ENCODE measurements at regions of chr10 and their contacts with region 1.

Region 1: GRCh38 chr10:61547297-61547696 is 94.1 kb upstream of the TMEM26 start:
- DNase-seq: no peak
- ATAC-seq: no peak
- H3K4me3 ChIP-seq: no peak overlapping the region
- H3K27ac ChIP-seq: no peak overlapping the region
- H3K4me1 ChIP-seq: no peaks in the 10 kb centered on the region
- H3K27me3 ChIP-seq: no peaks in the 10 kb centered on the region; the same call in none of the 2 replicates
- CTCF ChIP-seq: no peak
- POLR2A ChIP-seq: no peak
- RAD21 ChIP-seq: no peak

Region 2: DNA sequence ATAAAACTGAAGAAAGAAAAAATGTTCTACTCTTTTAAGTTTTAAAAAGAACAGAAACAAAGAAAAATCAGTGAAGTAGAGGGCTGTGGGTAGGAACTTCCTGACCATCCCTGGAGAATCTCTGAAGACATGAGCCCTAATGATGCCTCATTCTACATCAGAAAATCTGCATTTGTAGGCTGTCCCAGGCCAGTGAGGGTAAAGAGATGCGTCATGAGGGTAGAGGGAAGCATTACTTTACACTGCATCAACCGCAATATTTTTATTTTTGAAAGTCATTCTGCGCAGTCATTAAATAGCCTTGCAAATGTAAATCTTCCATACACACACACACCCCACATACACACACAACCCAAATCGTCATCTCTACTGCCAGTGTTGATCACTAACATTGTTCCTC is 33.3 kb after region 1 on chr10:
- CTCF ChIA-PET with region 1: no interaction called
- POLR2A ChIA-PET with region 1: no interaction called
- dilution Hi-C with region 1: no loop called
- in situ Hi-C with region 1: no loop called
- intact Hi-C with region 1: loop called (anchors 5 kb)
- DNase-seq: no peak
- ATAC-seq: no peak
- H3K4me3 ChIP-seq: no peak overlapping the region
- H3K27ac ChIP-seq: no peak overlapping the region
- H3K4me1 ChIP-seq: no peaks in the 10 kb centered on the region
- H3K27me3 ChIP-seq: no peaks in the 10 kb centered on the region
- CTCF ChIP-seq: no peak
- POLR2A ChIP-seq: no peak
- RAD21 ChIP-seq: no peak

Region 3: DNA sequence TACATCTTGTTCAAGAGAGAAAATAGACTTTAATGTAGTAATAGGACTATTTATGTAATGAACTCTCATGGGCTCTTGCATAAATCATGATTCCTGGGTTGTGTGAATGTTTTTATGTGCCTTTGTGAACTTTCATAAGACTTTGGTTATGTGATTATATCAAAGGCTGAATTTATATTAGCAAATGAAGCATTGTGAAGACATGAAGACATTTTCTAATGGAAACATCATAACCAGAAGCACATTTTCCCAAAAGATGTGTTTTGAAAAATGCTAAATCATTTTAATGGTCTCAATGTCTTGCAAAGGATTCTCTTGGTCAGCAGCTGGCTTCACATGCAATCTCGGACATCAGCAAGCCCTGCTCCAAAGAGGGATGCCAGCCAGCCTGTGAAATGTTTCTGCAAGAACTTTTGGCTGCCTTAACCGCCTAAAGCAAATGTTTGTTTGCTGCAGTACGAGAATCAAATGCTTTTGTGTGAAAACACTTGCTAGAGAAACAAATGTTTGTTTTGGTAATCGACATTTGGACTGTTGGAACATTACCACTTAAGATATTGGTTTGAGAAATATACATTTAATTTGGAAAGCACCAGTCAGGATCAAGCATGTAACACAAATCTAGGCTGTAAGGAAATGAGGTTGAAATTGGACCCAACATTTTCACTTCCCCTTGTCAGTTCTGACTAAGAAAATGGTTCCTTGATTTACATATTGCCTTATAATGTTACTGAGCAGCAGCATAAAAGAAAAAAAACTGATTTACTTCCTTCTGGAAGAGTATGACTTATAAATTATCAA is 619.2 kb after region 1 on chr10:
- CTCF ChIA-PET with region 1: no interaction called
- POLR2A ChIA-PET with region 1: no interaction called
- dilution Hi-C with region 1: no loop called
- in situ Hi-C with region 1: no loop called
- intact Hi-C with region 1: no loop called
- DNase-seq: peak; percentile 65
- ATAC-seq: peak; percentile 82
- H3K4me3 ChIP-seq: peak overlapping the region; percentile 11; the same call in 1 of the 2 replicates
- H3K27ac ChIP-seq: peak overlapping the region; percentile 93
- H3K4me1 ChIP-seq: peaks cover 2% of the 10 kb centered on the region; the same call in 1 of the 2 replicates
- H3K27me3 ChIP-seq: no peaks in the 10 kb centered on the region
- CTCF ChIP-seq: no peak
- POLR2A ChIP-seq: no peak
- RAD21 ChIP-seq: no peak

Measured in IMR-90 (cell line).